ENCODE measurements at regions of chr2 and their contacts with region 1.

Region 1: DNA sequence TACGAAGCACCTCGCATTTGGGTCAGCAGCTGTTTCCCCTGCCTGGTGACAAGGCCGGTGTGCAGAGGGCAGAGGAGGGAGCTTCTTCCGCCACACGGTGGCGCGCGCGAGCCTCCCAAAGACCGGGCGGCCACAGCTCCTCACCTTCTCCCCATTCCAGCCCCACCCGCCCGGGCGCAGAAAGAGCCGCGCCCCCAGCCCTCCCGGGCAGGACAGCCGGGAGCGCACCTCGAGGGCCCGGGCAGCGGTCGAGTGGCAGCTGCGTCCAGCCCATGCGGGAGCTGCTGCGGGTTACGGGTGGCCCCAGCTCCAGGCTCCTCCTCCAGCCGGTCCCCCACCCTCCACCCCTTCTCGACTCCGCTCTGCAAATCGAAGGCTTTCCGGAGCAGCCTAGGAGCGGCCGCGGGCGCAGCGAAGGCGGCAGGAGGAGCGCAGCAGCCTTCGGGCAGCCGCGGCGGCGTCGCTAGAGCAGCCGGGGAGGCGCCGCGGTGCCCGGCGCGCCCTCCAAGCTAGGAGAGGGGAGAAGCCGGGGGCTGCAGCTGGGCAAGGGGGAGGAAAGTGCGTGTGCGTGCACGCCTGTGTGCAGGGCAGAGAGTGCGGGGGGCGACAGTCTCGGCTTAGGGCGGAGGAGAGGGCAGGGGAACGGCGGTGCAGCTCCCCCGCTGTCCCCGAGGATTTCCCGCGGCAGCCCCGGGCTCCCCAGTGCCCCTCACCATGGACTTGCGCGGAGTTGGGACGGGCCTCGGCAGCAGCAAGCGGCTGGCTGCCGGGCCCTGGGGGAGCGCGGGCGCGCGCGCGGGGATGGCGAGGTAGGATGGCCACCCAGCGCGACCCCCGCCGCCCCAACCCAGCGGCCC is at the start of gene CCDC85A:
- DNase-seq: peak; percentile 60
- ATAC-seq: peak; percentile 85
- H3K4me3 ChIP-seq: peak within 1 kb of the TSS; percentile 48 to 63
- H3K27ac ChIP-seq: no peak within 1 kb of the TSS; the same call in 1 of the 2 replicates
- H3K4me1 ChIP-seq: peaks cover 3 to 25% of the 10 kb centered on the region in 2 experiments; a peak in 3 of 4 replicates
- H3K27me3 ChIP-seq: 0 out of 2 replicates have a peak, but pooled peaks cover 2% of the 10 kb centered on the region
- CTCF ChIP-seq: peak; percentile 58 to 84 (median 70)
- POLR2A ChIP-seq: no peak
- RAD21 ChIP-seq: peak; percentile 86
- total RNA-seq, gene CCDC85A: 0.10 TPM

Region 2: DNA sequence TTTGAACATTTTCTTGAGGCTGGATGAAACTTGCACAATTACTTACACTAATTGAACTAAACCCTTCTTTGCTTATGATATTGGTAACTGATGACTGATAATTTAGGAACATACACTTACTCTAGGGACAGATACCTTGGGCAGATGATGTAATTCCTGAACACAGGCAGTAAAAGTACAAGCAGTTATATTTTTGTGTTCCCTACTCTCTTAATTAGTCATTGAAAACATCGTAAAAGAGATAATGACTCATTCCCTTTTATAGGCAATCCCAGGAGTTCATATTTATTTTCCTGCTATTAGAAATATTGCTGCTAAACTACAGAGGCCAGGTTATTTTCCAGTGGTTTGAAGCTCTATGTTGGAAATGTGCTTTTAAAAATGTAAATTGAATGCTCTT is 46.3 kb after region 1 on chr2:
- CTCF ChIA-PET with region 1: no interaction called
- POLR2A ChIA-PET with region 1: no interaction called
- RAD21 ChIA-PET with region 1: no interaction called
- intact Hi-C with region 1: loop called (anchors 1 kb)
- DNase-seq: peak; percentile 24
- ATAC-seq: peak; percentile 27; the same call in 1 of the 2 replicates
- H3K4me3 ChIP-seq: no peak overlapping the region
- H3K27ac ChIP-seq: no peak overlapping the region
- H3K4me1 ChIP-seq: peaks cover 21% of the 10 kb centered on the region in 2 experiments
- H3K27me3 ChIP-seq: no peaks in the 10 kb centered on the region
- CTCF ChIP-seq: no peak
- POLR2A ChIP-seq: no peak
- RAD21 ChIP-seq: no peak

Region 3: GRCh38 chr2:56749152-56749752 is 565.4 kb after region 1 on chr2:
- CTCF ChIA-PET with region 1: interaction called, 22 read pairs
- POLR2A ChIA-PET with region 1: no interaction called
- RAD21 ChIA-PET with region 1: interaction called in 1 of 2 experiments, 3 read pairs
- intact Hi-C with region 1: loop called (anchors 5 kb)
- DNase-seq: peak; percentile 21
- ATAC-seq: peak; percentile 50; the same call in 1 of the 2 replicates
- H3K4me3 ChIP-seq: no peak overlapping the region
- H3K27ac ChIP-seq: no peak overlapping the region
- H3K4me1 ChIP-seq: no peaks in the 10 kb centered on the region
- H3K27me3 ChIP-seq: no peaks in the 10 kb centered on the region
- CTCF ChIP-seq: peak in 2 of 3 experiments; percentile 48 to 57; a peak in 3 of 6 replicates
- POLR2A ChIP-seq: no peak
- RAD21 ChIP-seq: peak; percentile 65

Region 4: DNA sequence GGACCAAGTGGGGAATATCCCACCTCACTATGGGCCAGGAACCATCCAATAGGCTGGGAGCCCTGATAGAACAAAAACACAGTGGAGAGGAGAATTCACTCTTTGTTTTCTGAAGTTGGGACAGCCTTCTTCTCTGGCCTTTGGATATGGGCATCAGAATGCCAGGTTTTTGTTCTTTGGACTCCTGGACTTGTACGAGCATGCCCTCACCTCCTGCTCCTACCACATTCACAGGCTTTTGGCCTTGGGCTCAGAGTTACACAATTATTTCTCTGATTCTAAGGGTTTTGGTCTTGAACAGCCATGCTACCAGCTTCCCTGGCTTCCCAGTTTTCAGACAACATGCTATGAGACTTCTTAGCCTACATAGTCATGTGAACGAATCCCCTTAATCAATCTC is 1129.8 kb after region 1 on chr2:
- CTCF ChIA-PET with region 1: no interaction called
- POLR2A ChIA-PET with region 1: no interaction called
- RAD21 ChIA-PET with region 1: no interaction called
- intact Hi-C with region 1: no loop called
- DNase-seq: no peak
- ATAC-seq: no peak
- H3K4me3 ChIP-seq: no peak overlapping the region
- H3K27ac ChIP-seq: no peak overlapping the region
- H3K4me1 ChIP-seq: no peaks in the 10 kb centered on the region
- H3K27me3 ChIP-seq: no peaks in the 10 kb centered on the region
- CTCF ChIP-seq: no peak
- POLR2A ChIP-seq: no peak
- RAD21 ChIP-seq: no peak

Region 5: DNA sequence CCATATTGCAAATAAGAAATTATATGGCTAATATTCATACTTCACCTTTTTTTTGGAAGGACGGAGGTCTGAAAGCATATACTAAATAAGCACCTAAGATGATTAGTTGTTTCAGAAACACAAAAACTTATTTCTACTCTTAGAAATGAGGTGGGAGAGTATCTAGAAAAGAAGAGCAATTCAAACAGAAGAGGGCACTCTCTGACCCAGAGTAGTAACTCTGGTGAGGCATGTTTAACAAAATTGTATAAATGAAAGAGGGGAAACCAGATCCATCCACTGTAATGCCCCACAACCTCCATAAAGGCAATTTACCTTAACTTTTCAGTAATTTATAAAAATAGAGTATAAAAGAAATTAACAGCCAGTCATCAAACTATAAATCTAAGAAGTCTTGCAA is 1193.1 kb after region 1 on chr2:
- CTCF ChIA-PET with region 1: no interaction called
- POLR2A ChIA-PET with region 1: no interaction called
- RAD21 ChIA-PET with region 1: no interaction called
- intact Hi-C with region 1: loop called (anchors 5 kb)
- DNase-seq: no peak
- ATAC-seq: peak; percentile 64
- H3K4me3 ChIP-seq: no peak overlapping the region
- H3K27ac ChIP-seq: no peak overlapping the region
- H3K4me1 ChIP-seq: peaks cover 10 to 34% of the 10 kb centered on the region in 2 experiments
- H3K27me3 ChIP-seq: no peaks in the 10 kb centered on the region
- CTCF ChIP-seq: peak; percentile 31 to 58 (median 53); a peak in 4 of 6 replicates
- POLR2A ChIP-seq: no peak
- RAD21 ChIP-seq: peak; percentile 74

Region 6: GRCh38 chr2:57497489-57498096 is 1313.7 kb after region 1 on chr2:
- CTCF ChIA-PET with region 1: interaction called, 6 read pairs
- POLR2A ChIA-PET with region 1: no interaction called
- RAD21 ChIA-PET with region 1: no interaction called
- intact Hi-C with region 1: loop called (anchors 5 kb)
- DNase-seq: peak; percentile 41
- ATAC-seq: peak; percentile 72
- H3K4me3 ChIP-seq: no peak overlapping the region
- H3K27ac ChIP-seq: no peak overlapping the region
- H3K4me1 ChIP-seq: no peaks in the 10 kb centered on the region
- H3K27me3 ChIP-seq: no peaks in the 10 kb centered on the region
- CTCF ChIP-seq: peak; percentile 73 to 88 (median 77)
- POLR2A ChIP-seq: no peak
- RAD21 ChIP-seq: peak; percentile 87

Region 7: GRCh38 chr2:57516698-57517340 is 1332.9 kb after region 1 on chr2:
- CTCF ChIA-PET with region 1: interaction called, 12 read pairs
- POLR2A ChIA-PET with region 1: no interaction called
- RAD21 ChIA-PET with region 1: no interaction called
- intact Hi-C with region 1: loop called (anchors 1 kb)
- DNase-seq: peak; percentile 41
- ATAC-seq: peak; percentile 78
- H3K4me3 ChIP-seq: no peak overlapping the region; a peak in 1 of 4 replicates
- H3K27ac ChIP-seq: no peak overlapping the region
- H3K4me1 ChIP-seq: no peaks in the 10 kb centered on the region
- H3K27me3 ChIP-seq: no peaks in the 10 kb centered on the region
- CTCF ChIP-seq: peak in 2 of 3 experiments; percentile 43 to 70; a peak in 3 of 6 replicates
- POLR2A ChIP-seq: no peak
- RAD21 ChIP-seq: peak; percentile 80